ENCODE measurements at regions of chr19 and their contacts with region 1.

Region 1: GRCh38 chr19:48608798-48609263 is 2.3 kb downstream of the SPACA4 start:
- DNase-seq: peak; percentile 83 to 88
- ATAC-seq: peak; percentile 75 to 82
- H3K4me3 ChIP-seq: no peak overlapping the region
- H3K27ac ChIP-seq: peak overlapping the region; percentile 65 to 78
- H3K4me1 ChIP-seq: peaks cover 5% of the 10 kb centered on the region; the same call in 1 of the 3 replicates
- CTCF ChIP-seq: peak; percentile 92
- EP300 ChIP-seq: no peak
- POLR2A ChIP-seq: no peak
- RAD21 ChIP-seq: peak; percentile 94 to 98

Region 2: GRCh38 chr19:48487996-48488395 is 120.8 kb before region 1 on chr19:
- CTCF ChIA-PET with region 1: interaction called, 83 read pairs
- POLR2A ChIA-PET with region 1: interaction called, 12 read pairs
- DNase-seq: peak; percentile 88 to 98
- ATAC-seq: peak; percentile 47 to 59
- H3K4me3 ChIP-seq: peak overlapping the region; percentile 23; the same call in 1 of the 3 replicates
- H3K27ac ChIP-seq: peak overlapping the region; percentile 91 to 94
- H3K4me1 ChIP-seq: peaks cover 72% of the 10 kb centered on the region
- CTCF ChIP-seq: no peak
- EP300 ChIP-seq: peak; percentile 50 to 71; a peak in 3 of 5 replicates
- POLR2A ChIP-seq: no peak
- RAD21 ChIP-seq: peak; percentile 13 to 39; a peak in 2 of 5 replicates

Region 3: DNA sequence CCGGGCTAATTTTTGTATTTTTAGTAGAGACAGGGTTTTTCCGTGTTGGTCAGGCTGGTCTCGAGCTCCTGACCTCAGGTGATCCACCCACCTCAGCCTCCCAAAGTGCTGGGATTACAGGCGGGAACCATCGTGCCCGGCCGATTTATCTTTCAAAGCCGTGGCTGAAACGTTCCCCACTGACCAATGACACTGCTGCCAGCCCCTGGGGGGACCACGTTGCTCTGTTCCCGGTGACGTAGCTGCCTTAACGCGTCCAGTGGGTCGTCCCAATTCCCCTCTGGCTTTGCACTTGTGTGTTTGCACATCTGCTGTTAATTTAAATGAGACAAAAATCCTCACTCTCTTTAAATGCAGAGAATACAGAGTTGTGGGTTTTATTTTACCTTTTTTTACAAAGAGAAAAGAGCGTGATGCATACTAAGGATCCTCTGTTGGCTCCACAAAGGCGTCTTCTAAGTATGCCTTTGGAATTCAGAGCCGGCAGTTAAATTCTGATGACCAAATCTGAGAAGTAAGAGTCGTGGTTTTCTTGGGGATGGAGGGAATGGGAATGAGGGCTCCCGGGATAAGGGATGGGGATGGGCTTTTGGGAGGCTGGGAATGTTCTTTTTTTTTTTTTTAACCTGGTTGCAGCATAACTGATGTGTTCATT is 78.6 kb before region 1 on chr19:
- CTCF ChIA-PET with region 1: no interaction called
- POLR2A ChIA-PET with region 1: no interaction called
- DNase-seq: no peak
- ATAC-seq: 0 out of 6 replicates have a peak, but pooled peaks of 1 of the 2 experiments have one; percentile 13
- H3K4me3 ChIP-seq: no peak overlapping the region
- H3K27ac ChIP-seq: no peak overlapping the region
- H3K4me1 ChIP-seq: no peaks in the 10 kb centered on the region
- CTCF ChIP-seq: no peak
- EP300 ChIP-seq: no peak
- POLR2A ChIP-seq: no peak
- RAD21 ChIP-seq: no peak

Region 4: GRCh38 chr19:48639452-48640375 is 30.9 kb after region 1 on chr19:
- CTCF ChIA-PET with region 1: no interaction called
- POLR2A ChIA-PET with region 1: no interaction called
- DNase-seq: no peak
- ATAC-seq: no peak
- H3K4me3 ChIP-seq: no peak overlapping the region
- H3K27ac ChIP-seq: no peak overlapping the region
- H3K4me1 ChIP-seq: peaks cover 27% of the 10 kb centered on the region
- CTCF ChIP-seq: no peak
- EP300 ChIP-seq: no peak
- POLR2A ChIP-seq: no peak
- RAD21 ChIP-seq: no peak

Region 5: GRCh38 chr19:48858984-48859710 is 250.3 kb after region 1 on chr19:
- CTCF ChIA-PET with region 1: no interaction called
- POLR2A ChIA-PET with region 1: no interaction called
- DNase-seq: no peak
- ATAC-seq: peak; percentile 22 to 58; a peak in 4 of 6 replicates
- H3K4me3 ChIP-seq: no peak overlapping the region
- H3K27ac ChIP-seq: no peak overlapping the region
- H3K4me1 ChIP-seq: no peaks in the 10 kb centered on the region
- CTCF ChIP-seq: no peak
- EP300 ChIP-seq: no peak
- POLR2A ChIP-seq: no peak
- RAD21 ChIP-seq: no peak